GM10248 (cell line): ENCODE measurements at regions of chr6 and their contacts with region 1.

Region 1: GRCh38 chr6:27825025-27825793 is 87.0 kb downstream of the OR2B2 start:
- DNase-seq: no peak
- CTCF ChIP-seq: no peak

Region 2: DNA sequence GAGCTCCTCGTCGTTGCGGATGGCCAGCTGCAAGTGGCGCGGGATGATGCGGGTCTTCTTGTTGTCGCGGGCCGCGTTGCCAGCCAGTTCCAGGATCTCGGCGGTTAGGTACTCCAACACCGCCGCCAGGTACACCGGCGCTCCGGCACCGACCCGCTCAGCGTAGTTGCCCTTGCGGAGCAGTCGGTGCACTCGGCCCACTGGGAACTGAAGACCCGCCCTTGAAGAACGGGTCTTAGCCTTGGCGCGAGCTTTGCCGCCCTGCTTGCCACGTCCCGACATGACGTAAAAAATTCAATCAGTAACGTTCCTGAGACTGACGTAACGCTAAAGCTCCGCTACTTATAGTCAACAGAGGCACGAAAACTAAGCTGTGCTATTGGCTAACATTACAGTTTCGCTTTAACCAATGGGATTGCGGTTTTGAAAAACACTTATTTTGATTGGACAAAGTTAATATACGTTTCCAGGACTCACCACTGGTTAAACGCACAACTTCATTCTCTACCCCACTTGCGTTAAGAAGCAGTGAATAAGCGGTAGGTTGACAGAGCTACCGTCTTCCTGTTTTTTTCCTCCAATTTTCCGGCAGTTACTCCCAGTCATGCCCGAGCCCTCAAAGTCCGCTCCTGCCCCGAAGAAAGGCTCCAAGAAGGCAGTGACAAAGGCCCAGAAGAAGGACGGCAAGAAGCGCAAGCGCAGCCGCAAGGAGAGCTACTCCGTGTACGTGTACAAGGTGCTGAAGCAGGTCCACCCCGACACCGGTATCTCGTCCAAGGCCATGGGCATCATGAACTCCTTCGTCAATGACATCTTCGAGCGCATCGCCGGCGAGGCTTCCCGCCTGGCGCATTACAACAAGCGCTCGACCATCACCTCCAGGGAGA is 13.1 kb after region 1 on chr6:
- CTCF ChIA-PET with region 1: interaction called, 63 read pairs
- POLR2A ChIA-PET with region 1: interaction called, 30 read pairs
- DNase-seq: peak; percentile 89
- CTCF ChIP-seq: no peak

Region 3: GRCh38 chr6:27864906-27865849 is 40.0 kb after region 1 on chr6:
- CTCF ChIA-PET with region 1: interaction called, 7 read pairs
- POLR2A ChIA-PET with region 1: interaction called, 16 read pairs
- DNase-seq: peak; percentile 89
- CTCF ChIP-seq: no peak

Region 4: DNA sequence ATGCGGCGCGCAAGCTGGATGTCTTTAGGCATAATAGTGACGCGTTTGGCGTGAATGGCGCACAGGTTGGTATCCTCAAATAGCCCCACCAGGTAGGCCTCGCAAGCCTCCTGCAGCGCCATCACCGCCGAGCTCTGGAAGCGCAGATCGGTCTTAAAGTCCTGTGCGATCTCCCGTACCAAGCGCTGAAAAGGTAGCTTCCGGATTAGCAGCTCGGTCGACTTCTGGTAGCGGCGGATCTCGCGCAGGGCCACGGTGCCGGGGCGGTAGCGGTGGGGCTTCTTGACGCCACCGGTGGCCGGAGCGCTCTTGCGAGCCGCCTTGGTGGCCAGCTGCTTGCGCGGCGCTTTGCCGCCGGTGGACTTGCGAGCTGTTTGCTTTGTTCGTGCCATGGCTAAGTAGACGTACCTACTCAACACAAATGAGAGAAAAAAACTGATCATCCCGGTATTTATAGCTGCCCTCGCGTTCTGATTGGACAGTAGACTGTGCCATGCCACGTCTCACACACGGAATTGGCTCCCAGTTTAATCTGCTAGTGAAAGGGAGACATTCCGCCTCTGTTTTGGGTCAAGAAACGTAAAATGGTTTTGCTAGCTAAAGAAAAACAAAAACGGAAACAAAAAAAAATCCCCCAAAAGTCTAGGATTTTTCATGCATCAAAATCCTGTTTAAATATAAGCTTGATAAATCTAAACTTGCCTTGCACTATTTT is 46.9 kb after region 1 on chr6:
- CTCF ChIA-PET with region 1: interaction called, 7 read pairs
- POLR2A ChIA-PET with region 1: interaction called, 16 read pairs
- DNase-seq: peak; percentile 86
- CTCF ChIP-seq: peak; percentile 56

Region 5: GRCh38 chr6:27957516-27957915 is 132.3 kb after region 1 on chr6:
- CTCF ChIA-PET with region 1: no interaction called
- POLR2A ChIA-PET with region 1: no interaction called
- DNase-seq: no peak
- CTCF ChIP-seq: no peak